MCF 10A (cell line): ENCODE measurements at regions of chr7 and their contacts with region 1.

Region 1: DNA sequence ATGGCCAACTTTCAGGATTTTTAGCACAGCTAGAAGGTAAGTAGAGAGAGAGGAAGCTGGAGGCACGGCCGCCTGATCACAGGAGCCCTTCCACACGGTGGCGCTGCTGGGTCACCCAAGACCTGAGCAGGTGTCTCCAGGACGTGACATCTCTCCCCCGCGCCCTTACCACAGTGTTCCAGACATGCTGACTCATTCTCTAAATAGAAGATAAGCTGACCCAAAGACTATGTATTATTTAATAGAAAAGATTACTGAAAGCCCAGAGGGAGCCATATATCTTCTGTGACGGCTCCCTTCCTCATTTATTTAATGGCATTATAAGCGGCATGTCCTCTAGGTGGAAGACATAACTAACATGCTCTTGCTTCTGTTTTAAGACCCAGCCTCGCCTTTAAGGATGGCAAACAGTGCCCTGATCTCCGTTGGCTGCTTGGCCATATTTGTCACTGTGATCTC is 26.0 kb upstream of the MALSU1 start:
- DNase-seq: peak; percentile 95
- H3K4me3 Mint-ChIP-seq: peak overlapping the region; percentile 18
- H3K27ac Mint-ChIP-seq: no peak overlapping the region
- H3K4me1 Mint-ChIP-seq: peaks cover 6% of the 10 kb centered on the region
- H3K27me3 Mint-ChIP-seq: no peaks in the 10 kb centered on the region
- CTCF ChIP-seq: peak; percentile 84

Region 2: GRCh38 chr7:23220690-23221305 is 52.4 kb before region 1 on chr7:
- CTCF ChIA-PET with region 1: no interaction called
- POLR2A ChIA-PET with region 1: no interaction called
- intact Hi-C with region 1: no loop called
- DNase-seq: no peak
- H3K4me3 Mint-ChIP-seq: no peak overlapping the region
- H3K27ac Mint-ChIP-seq: no peak overlapping the region
- H3K4me1 Mint-ChIP-seq: peaks cover 5% of the 10 kb centered on the region
- H3K27me3 Mint-ChIP-seq: no peaks in the 10 kb centered on the region
- CTCF ChIP-seq: no peak

Region 3: DNA sequence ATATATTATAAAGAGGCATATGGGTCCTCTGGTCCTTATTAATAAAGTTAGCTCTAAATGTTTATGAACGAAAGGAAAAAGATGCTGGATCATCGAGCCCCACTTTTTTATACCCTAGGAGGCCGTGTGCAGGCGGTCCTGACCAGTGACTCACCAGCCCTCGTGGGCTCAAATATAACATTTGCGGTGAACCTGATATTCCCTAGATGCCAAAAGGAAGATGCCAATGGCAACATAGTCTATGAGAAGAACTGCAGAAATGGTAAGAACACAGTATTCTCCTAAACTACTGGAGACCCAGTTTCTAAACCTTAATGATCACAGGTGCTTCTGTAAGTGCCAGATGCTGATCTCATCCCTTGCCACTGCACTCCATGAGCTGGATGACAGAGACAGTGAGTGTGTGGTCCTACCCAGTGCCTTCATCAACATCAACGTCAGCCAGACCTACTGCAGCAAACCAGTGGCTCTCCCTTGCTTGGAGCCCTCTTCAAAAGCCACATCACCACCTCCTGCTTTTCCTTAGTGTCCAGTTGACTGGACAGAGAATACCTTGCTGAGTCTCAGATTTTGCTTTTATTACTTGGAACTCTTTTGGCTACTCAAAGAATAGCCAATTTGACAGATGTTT is 19.0 kb before region 1 on chr7:
- CTCF ChIA-PET with region 1: interaction called, 99 read pairs
- POLR2A ChIA-PET with region 1: interaction called, 3 read pairs
- intact Hi-C with region 1: no loop called
- DNase-seq: no peak
- H3K4me3 Mint-ChIP-seq: no peak overlapping the region
- H3K27ac Mint-ChIP-seq: no peak overlapping the region
- H3K4me1 Mint-ChIP-seq: no peaks in the 10 kb centered on the region
- H3K27me3 Mint-ChIP-seq: no peaks in the 10 kb centered on the region
- CTCF ChIP-seq: no peak

Region 4: GRCh38 chr7:23347682-23348180 is 74.6 kb after region 1 on chr7:
- CTCF ChIA-PET with region 1: interaction called, 19 read pairs
- POLR2A ChIA-PET with region 1: interaction called, 4 read pairs
- intact Hi-C with region 1: no loop called
- DNase-seq: peak; percentile 83
- H3K4me3 Mint-ChIP-seq: peak overlapping the region; percentile 68
- H3K27ac Mint-ChIP-seq: peak overlapping the region; percentile 90
- H3K4me1 Mint-ChIP-seq: peaks cover 28% of the 10 kb centered on the region
- H3K27me3 Mint-ChIP-seq: no peaks in the 10 kb centered on the region
- CTCF ChIP-seq: no peak

Region 5: DNA sequence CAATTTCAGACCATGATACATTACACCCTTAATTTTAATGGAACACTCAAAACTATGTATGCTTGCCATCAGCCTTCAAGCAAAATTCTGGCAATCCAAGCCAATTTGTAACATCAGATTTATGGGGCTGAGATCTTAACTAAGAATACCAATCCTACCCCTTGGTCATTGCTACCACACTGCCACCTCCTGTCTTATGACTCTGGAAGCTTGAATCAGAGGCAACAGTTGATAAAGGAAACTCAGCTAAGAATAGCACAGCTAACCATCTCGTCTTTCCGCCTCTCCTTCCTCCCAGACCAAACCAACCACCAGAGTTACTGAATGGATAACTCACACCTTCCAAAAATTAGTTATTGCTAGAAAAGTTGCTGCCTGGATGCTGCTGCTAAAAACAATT is 189.7 kb after region 1 on chr7:
- CTCF ChIA-PET with region 1: interaction called, 18 read pairs
- POLR2A ChIA-PET with region 1: interaction called, 3 read pairs
- intact Hi-C with region 1: loop called (anchors 1 kb)
- DNase-seq: peak; percentile 20
- H3K4me3 Mint-ChIP-seq: no peak overlapping the region
- H3K27ac Mint-ChIP-seq: no peak overlapping the region
- H3K4me1 Mint-ChIP-seq: peaks cover 19% of the 10 kb centered on the region
- H3K27me3 Mint-ChIP-seq: peaks cover 13% of the 10 kb centered on the region
- CTCF ChIP-seq: no peak

Region 6: GRCh38 chr7:23546897-23547572 is 273.9 kb after region 1 on chr7:
- CTCF ChIA-PET with region 1: interaction called, 81 read pairs
- POLR2A ChIA-PET with region 1: interaction called, 6 read pairs
- intact Hi-C with region 1: loop called (anchors 1 kb)
- DNase-seq: peak; percentile 88
- H3K4me3 Mint-ChIP-seq: no peak overlapping the region
- H3K27ac Mint-ChIP-seq: no peak overlapping the region
- H3K4me1 Mint-ChIP-seq: peaks cover 12% of the 10 kb centered on the region
- H3K27me3 Mint-ChIP-seq: no peaks in the 10 kb centered on the region
- CTCF ChIP-seq: peak; percentile 89